CD8-positive, alpha-beta memory T cell (primary cell): ENCODE measurements at regions of chr17 and their contacts with region 1.

Region 1: DNA sequence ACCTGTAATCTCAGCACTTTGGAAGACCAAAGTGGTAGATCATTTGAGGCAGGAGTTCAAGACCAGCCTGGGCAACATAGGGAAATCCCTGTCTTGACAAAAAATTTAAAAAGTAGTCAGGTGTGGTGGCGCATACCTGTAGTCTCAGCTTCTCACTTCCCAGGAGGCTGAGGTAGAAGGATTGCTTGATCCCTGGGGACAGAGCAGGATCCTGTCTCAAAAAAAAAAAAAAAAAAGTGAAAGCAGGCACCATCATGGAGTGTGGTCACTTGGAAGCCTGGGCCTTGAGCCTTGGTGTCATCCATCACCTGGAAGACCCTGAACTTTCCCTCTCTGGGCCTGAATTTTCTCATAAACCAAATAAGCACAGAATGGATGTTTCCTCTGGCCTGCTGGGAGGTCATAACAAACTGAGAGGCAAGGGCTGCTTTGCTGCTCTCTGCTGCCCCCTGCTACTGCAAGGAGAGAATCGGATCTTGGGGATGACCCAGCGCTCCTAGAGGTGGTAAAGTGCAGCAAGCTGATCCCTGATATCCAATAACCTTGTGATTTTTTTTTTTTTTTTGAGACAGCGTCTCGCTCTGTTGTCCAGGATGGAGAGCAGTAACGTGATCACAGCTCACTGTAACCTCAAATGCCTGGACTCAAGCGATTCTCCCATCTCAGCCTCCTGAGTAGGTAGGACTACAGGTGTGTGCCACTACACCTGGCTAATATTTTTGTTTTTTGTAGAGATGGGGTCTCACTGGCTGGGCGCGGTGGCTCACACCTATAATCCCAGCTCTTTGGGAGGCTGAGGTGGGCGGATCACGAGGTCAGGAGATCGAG is 75.9 kb upstream of the RNU2-1 start:
- DNase-seq: no peak
- H3K4me3 ChIP-seq: no peak overlapping the region
- H3K4me3 Mint-ChIP-seq: no peak overlapping the region
- H3K27ac ChIP-seq: no peak overlapping the region
- H3K27ac Mint-ChIP-seq: no peak overlapping the region
- H3K4me1 ChIP-seq: no peaks in the 10 kb centered on the region
- H3K4me1 Mint-ChIP-seq: peaks cover 0 to 2% (median 0%) of the 10 kb centered on the region in 3 donors
- H3K27me3 ChIP-seq: no peaks in the 10 kb centered on the region
- H3K27me3 Mint-ChIP-seq: no peaks in the 10 kb centered on the region

Region 2: DNA sequence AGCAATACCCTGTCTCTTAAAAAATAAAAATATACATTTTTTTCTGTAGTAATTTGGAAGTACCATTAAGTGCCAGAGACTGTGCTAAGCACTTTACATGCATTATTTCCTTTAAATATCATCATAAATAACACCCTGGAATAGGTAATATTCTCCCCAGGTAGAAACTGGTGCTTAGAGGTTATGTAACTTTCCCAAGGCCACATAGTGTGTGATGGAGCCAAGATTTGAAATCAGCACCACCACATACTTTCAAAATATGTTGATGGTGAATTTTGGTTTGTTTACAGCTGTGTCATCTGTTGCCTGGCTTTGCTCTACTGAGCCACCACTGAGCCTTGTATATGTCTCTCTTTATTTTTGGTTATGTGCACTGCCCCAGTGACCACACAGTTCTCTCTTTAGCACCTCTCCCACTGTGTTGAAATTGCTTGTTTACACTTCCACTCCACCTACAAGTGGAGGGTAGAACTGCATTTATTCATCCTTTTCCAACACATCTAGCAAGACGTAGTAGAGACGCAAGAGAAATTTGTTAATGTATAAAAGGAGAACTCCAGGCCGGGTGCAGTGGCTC is 157.8 kb before region 1 on chr17:
- CTCF ChIA-PET with region 1: no interaction called
- POLR2A ChIA-PET with region 1: no interaction called
- DNase-seq: no peak
- H3K4me3 ChIP-seq: no peak overlapping the region
- H3K4me3 Mint-ChIP-seq: no peak overlapping the region
- H3K27ac ChIP-seq: no peak overlapping the region
- H3K27ac Mint-ChIP-seq: no peak overlapping the region
- H3K4me1 ChIP-seq: no peaks in the 10 kb centered on the region
- H3K4me1 Mint-ChIP-seq: no peaks in the 10 kb centered on the region
- H3K27me3 ChIP-seq: no peaks in the 10 kb centered on the region
- H3K27me3 Mint-ChIP-seq: peaks cover 0 to 3% of the 10 kb centered on the region in 2 donors

Region 3: DNA sequence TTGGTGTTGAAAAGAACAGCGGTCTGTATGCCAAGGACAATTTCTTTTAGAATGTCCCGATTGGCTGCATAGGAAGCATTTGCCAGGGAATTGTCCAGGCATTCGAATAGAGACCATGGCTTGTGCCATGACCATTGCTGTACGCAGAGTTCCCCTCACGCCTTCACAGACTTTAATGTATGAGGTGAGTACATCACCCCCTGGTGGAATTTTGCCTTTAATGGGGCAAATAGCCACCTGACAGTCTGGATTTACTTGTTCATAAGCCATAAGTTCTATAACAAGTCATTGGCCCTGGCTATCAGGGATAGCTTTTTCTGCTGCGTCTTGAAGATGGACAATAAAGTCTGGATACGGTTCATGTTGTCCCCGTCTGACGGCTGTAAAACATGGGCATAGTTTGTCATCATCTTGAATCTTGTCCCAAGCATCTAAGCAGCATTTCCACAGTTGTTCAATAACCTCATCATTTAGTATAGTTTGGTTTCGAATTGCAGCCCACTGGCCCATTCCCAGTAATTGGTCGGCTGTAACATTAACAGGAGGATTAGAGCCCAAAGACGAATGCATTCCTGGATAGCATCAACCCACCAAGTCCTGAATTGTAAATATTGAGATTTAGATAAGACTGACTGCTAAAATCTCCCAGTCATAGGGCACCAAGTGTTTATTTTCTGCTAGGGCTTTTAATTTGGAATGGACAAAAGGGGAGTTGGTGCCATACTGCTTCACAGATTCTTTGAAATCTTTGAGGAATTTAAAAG is 21.3 kb after region 1 on chr17:
- CTCF ChIA-PET with region 1: interaction called, 47 read pairs
- POLR2A ChIA-PET with region 1: interaction called, 8 read pairs
- DNase-seq: no peak
- H3K4me3 ChIP-seq: no peak overlapping the region
- H3K4me3 Mint-ChIP-seq: no peak overlapping the region
- H3K27ac ChIP-seq: no peak overlapping the region
- H3K27ac Mint-ChIP-seq: no peak overlapping the region
- H3K4me1 ChIP-seq: peaks cover 6% of the 10 kb centered on the region
- H3K4me1 Mint-ChIP-seq: peaks cover 6 to 9% (median 7%) of the 10 kb centered on the region in 3 donors
- H3K27me3 ChIP-seq: no peaks in the 10 kb centered on the region
- H3K27me3 Mint-ChIP-seq: peaks cover 15 to 36% of the 10 kb centered on the region in 2 donors

Region 4: DNA sequence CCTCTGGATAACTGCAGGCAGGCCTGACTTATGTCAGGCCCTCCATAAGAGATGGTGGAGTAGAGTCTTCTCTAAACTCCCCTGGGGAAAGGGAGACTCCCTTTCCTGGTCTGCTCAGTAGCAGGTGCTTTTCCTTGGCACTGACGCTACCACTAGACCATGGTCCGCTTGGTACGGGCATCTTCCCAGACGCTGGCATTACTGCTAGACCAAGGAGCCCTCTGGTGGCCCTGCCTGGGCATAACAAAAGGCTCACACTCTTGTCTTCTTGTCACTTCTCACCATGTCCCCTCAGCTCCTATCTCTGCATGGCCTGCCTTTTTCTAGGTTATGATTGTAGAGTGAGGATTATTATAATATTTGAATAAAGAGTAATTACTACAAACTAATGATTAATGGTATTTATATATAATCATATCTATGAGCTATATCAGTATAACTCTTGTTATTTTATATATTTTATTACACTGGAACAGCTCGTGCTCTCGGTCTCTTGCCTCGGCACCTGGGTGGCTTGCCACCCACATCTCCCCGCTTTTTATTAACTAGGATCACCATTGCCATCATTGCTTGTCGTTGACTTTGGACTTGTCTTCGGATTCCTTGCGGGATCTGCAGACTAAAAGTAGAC is 29.3 kb after region 1 on chr17:
- CTCF ChIA-PET with region 1: interaction called, 47 read pairs
- POLR2A ChIA-PET with region 1: interaction called, 8 read pairs
- DNase-seq: peak; percentile 27 to 73 (median 41)
- H3K4me3 ChIP-seq: no peak overlapping the region
- H3K4me3 Mint-ChIP-seq: no peak overlapping the region
- H3K27ac ChIP-seq: no peak overlapping the region
- H3K27ac Mint-ChIP-seq: peak overlapping the region in 1 of 8 donors; percentile 17
- H3K4me1 ChIP-seq: peaks cover 5% of the 10 kb centered on the region
- H3K4me1 Mint-ChIP-seq: peaks cover 6 to 14% (median 12%) of the 10 kb centered on the region in 3 donors
- H3K27me3 ChIP-seq: no peaks in the 10 kb centered on the region
- H3K27me3 Mint-ChIP-seq: peaks cover 0 to 5% of the 10 kb centered on the region in 2 donors

Region 5: GRCh38 chr17:43349142-43349541 is 39.4 kb after region 1 on chr17:
- CTCF ChIA-PET with region 1: no interaction called
- POLR2A ChIA-PET with region 1: no interaction called
- DNase-seq: no peak
- H3K4me3 ChIP-seq: no peak overlapping the region
- H3K4me3 Mint-ChIP-seq: no peak overlapping the region
- H3K27ac ChIP-seq: no peak overlapping the region
- H3K27ac Mint-ChIP-seq: no peak overlapping the region
- H3K4me1 ChIP-seq: no peaks in the 10 kb centered on the region
- H3K4me1 Mint-ChIP-seq: no peaks in the 10 kb centered on the region
- H3K27me3 ChIP-seq: no peaks in the 10 kb centered on the region
- H3K27me3 Mint-ChIP-seq: peaks cover 0 to 9% of the 10 kb centered on the region in 2 donors

Region 6: DNA sequence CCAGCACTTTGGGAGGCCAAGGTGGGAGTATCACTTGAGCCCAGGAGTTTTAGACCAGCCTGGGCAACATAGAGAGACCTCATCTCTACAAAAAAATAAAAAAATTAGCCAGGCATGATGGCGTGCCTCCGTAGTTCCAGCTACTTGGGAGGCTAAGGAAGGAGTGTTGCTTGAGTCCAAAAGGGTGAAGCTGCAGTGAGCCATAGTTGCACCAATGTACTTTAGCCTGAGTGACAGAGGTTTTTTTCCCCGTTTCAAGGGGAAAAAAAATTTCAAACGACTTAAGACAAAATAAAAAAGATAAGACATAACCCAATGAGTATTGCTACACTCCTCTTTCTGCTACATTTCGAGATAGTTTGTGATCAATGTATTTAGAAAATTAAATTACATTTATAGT is 180.9 kb after region 1 on chr17:
- CTCF ChIA-PET with region 1: no interaction called
- POLR2A ChIA-PET with region 1: no interaction called
- DNase-seq: no peak
- H3K4me3 ChIP-seq: no peak overlapping the region
- H3K4me3 Mint-ChIP-seq: no peak overlapping the region
- H3K27ac ChIP-seq: no peak overlapping the region
- H3K27ac Mint-ChIP-seq: no peak overlapping the region
- H3K4me1 ChIP-seq: peaks cover 12% of the 10 kb centered on the region
- H3K4me1 Mint-ChIP-seq: peaks cover 14 to 29% (median 16%) of the 10 kb centered on the region in 3 donors
- H3K27me3 ChIP-seq: no peaks in the 10 kb centered on the region
- H3K27me3 Mint-ChIP-seq: no peaks in the 10 kb centered on the region